IMR-90 (cell line): ENCODE measurements at regions of chr2 and their contacts with region 1.

Region 1: GRCh38 chr2:71505086-71505769 is 51.9 kb downstream of the DYSF start:
- DNase-seq: no peak
- ATAC-seq: no peak
- H3K4me3 ChIP-seq: no peak overlapping the region
- H3K27ac ChIP-seq: no peak overlapping the region
- H3K4me1 ChIP-seq: no peaks in the 10 kb centered on the region
- H3K27me3 ChIP-seq: peaks cover 3% of the 10 kb centered on the region; the same call in 1 of the 2 replicates
- CTCF ChIP-seq: no peak
- POLR2A ChIP-seq: no peak
- RAD21 ChIP-seq: no peak

Region 2: GRCh38 chr2:71157124-71157793 is 348.0 kb before region 1 on chr2:
- CTCF ChIA-PET with region 1: no interaction called
- POLR2A ChIA-PET with region 1: no interaction called
- dilution Hi-C with region 1: no loop called
- in situ Hi-C with region 1: loop called (anchors 10 kb)
- intact Hi-C with region 1: loop called (anchors 1 kb)
- DNase-seq: peak; percentile 18
- ATAC-seq: peak; percentile 89
- H3K4me3 ChIP-seq: peak overlapping the region; percentile 26
- H3K27ac ChIP-seq: no peak overlapping the region
- H3K4me1 ChIP-seq: peaks cover 2% of the 10 kb centered on the region; the same call in 1 of the 2 replicates
- H3K27me3 ChIP-seq: peaks cover 8% of the 10 kb centered on the region; the same call in 1 of the 2 replicates
- CTCF ChIP-seq: peak; percentile 47
- POLR2A ChIP-seq: no peak
- RAD21 ChIP-seq: peak; percentile 57